Right ventricle myocardium inferior (tissue), 1 donor: ENCODE measurements at regions of chr7 and their contacts with region 1.

Region 1: GRCh38 chr7:35985126-35985754 is 167.8 kb upstream of the EEPD1 start:
- DNase-seq: peak; percentile 93
- ATAC-seq: peak; percentile 93

Region 2: GRCh38 chr7:36084475-36085097 is 99.3 kb after region 1 on chr7:
- intact Hi-C with region 1: no loop called
- DNase-seq: no peak
- ATAC-seq: peak; percentile 69

Region 3: GRCh38 chr7:36096460-36097095 is 111.3 kb after region 1 on chr7:
- intact Hi-C with region 1: loop called (anchors 10 kb)
- DNase-seq: no peak
- ATAC-seq: peak; percentile 47

Region 4: GRCh38 chr7:36315309-36316133 is 330.3 kb after region 1 on chr7:
- intact Hi-C with region 1: loop called (anchors 1 kb)
- DNase-seq: no peak
- ATAC-seq: no peak